Posterior vena cava (tissue), 2 donors: ENCODE measurements at regions of chr12 and their contacts with region 1.

Region 1: GRCh38 chr12:3269594-3269993 is 192.4 kb downstream of the TSPAN9 start:
- DNase-seq: no peak

Region 2: GRCh38 chr12:3202734-3203446 is 66.7 kb before region 1 on chr12:
- intact Hi-C with region 1: loop called in 1 of 2 experiments (anchors 5 kb)
- DNase-seq: no peak